Panc1 (cell line): ENCODE measurements at regions of chr15 and their contacts with region 1.

Region 1: DNA sequence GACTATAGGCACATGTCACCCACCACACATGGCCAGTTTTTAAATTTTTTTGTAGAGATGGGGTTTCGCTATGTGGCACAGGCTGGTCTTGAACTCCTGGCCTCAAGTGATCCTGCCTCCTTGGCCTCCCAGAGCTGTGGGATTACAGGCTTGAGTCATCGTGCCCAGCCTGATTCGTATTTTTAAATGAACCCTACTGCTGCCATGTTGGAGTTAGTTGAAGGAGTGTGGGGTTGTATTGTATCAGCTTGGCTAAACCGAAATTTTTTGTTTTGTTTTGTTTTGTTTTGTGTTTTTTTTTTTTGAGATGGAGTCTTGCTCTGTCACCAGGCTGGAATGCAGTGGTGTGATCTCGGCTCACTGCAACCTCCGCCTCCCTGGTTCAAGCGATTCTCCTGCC is 11.8 kb upstream of the ZNF770 start:
- DNase-seq: no peak
- ATAC-seq: no peak
- H3K4me3 ChIP-seq: no peak overlapping the region
- H3K27ac ChIP-seq: no peak overlapping the region
- H3K4me1 ChIP-seq: peaks cover 4% of the 10 kb centered on the region; the same call in 1 of the 2 replicates
- H3K27me3 ChIP-seq: no peaks in the 10 kb centered on the region
- CTCF ChIP-seq: no peak

Region 2: GRCh38 chr15:34637305-34637704 is 362.6 kb before region 1 on chr15:
- CTCF ChIA-PET with region 1: no interaction called
- POLR2A ChIA-PET with region 1: interaction called, 17 read pairs
- in situ Hi-C with region 1: no loop called
- intact Hi-C with region 1: no loop called
- DNase-seq: no peak
- ATAC-seq: no peak
- H3K4me3 ChIP-seq: no peak overlapping the region
- H3K27ac ChIP-seq: no peak overlapping the region
- H3K4me1 ChIP-seq: no peaks in the 10 kb centered on the region
- H3K27me3 ChIP-seq: no peaks in the 10 kb centered on the region
- CTCF ChIP-seq: no peak

Region 3: GRCh38 chr15:36527235-36528162 is 1527.6 kb after region 1 on chr15:
- CTCF ChIA-PET with region 1: no interaction called
- POLR2A ChIA-PET with region 1: interaction called, 10 read pairs
- in situ Hi-C with region 1: no loop called
- intact Hi-C with region 1: no loop called
- DNase-seq: no peak
- ATAC-seq: no peak
- H3K4me3 ChIP-seq: no peak overlapping the region
- H3K27ac ChIP-seq: no peak overlapping the region
- H3K4me1 ChIP-seq: no peaks in the 10 kb centered on the region
- H3K27me3 ChIP-seq: peaks cover 5% of the 10 kb centered on the region; the same call in 1 of the 2 replicates
- CTCF ChIP-seq: no peak